ENCODE measurements at regions of chr3 and their contacts with region 1.

Region 1: DNA sequence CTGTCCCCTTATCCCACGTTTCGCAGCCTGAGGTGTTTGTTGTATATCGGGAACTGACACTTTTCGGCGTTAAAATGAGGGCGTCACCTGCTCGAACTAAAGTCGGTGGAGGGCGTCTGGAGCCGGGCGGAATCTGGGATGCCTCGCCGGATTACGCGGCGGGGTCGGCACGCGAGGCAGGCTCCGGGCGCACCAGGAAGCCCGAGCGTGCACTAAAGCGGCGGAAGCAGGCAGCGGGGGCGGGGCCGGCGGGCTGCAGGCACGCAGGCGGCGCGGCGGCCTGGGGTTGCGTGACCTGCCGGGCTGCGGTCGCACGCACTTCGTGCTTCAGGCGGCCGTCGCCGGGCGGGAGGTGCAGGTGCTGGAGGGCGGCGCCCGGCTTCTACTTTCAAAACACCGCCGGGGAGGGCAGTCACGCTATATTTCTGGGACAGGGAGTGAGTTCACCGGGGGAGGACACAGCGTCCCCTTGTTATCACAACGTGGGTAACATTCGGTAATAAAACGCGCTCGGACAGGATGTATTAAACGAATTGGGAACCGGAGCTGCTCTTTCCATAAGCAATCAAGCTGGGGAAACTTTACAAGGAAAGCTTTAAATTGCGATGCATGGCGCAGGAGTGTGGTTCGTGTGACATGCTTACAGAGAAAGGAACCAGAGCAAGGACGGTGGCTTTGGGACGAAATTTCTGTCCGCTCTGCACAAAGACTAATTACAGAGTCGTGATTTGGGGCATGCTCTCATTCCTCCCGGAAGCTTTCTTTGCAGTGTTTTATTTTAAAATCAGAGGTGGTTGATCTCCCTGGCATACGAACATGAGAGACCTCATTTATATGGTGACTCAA is 9.1 kb upstream of the LEKR1 start:
- DNase-seq: peak; percentile 84
- CTCF ChIP-seq: no peak

Region 2: GRCh38 chr3:156535162-156535627 is 281.8 kb before region 1 on chr3:
- in situ Hi-C with region 1: loop called (anchors 25 kb)
- DNase-seq: no peak
- CTCF ChIP-seq: no peak

Region 3: DNA sequence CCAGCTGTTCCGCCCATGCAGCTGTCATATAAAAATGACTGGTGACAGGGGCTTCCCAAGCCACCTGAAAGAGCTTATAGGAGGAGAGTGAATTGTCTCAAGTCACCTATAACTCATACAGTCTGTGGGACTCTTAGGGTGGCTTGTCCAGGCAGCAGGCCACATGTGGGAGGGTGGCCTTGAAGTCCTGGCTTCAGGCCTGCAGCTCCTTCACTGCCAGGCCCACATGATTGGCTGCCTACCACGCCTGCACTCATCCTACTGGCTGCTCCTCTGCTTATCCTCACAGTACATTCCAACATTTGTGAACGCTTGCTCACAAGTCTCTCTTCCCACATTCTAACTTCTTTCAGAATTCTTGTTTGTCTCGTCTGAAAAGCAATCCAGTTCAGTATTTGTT is 183.7 kb before region 1 on chr3:
- in situ Hi-C with region 1: no loop called
- DNase-seq: no peak
- CTCF ChIP-seq: no peak

Region 4: DNA sequence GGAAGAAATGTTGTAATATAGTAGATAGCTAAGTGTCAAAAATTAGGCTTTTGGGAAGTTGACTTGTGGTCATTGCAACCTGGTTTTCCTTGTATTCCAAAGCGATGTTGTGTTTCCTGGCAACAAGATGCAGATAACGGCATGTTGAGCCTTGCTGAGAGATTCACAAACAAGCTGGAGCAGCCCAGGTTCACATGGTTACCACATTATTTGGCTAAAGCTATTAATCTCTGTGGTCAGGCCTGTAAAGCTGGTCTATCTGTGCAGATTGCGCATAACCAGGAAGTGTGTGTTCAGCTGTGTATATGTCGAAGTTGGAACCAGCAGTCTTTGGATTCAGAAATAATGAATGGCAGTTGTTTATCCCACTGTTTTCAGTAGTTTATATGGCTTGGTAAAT is 136.0 kb before region 1 on chr3:
- in situ Hi-C with region 1: loop called (anchors 10 kb)
- DNase-seq: no peak
- CTCF ChIP-seq: no peak

Measured in GM13976 (cell line).